ENCODE measurements at regions of chr12 and their contacts with region 1.

Region 1: DNA sequence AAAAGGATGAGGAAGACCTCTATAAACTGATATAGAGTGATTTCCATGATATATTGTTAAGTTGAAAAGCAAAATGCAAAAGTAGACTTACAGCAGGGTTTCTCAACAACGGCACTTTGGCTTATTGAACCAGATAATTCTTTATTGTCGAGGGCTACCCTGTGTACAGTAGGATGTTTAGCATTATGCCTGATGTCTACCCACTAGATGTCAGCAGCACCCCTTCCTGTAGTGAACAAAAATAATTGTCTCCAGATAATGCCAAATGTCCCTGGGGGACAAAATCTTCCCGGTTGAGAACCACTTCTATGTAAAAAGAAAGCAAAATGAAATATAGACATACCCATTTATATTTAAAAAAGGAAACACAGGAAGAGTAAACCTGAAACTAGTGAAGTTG is 32.4 kb downstream of the ABCD2 start:
- DNase-seq: no peak
- H3K4me3 ChIP-seq: no peak overlapping the region
- H3K4me3 Mint-ChIP-seq: no peak overlapping the region
- H3K27ac Mint-ChIP-seq: no peak overlapping the region
- H3K4me1 ChIP-seq: 0 out of 2 replicates have a peak, but pooled peaks cover 3% of the 10 kb centered on the region
- H3K4me1 Mint-ChIP-seq: no peaks in the 10 kb centered on the region
- H3K27me3 ChIP-seq: no peaks in the 10 kb centered on the region
- H3K27me3 Mint-ChIP-seq: peaks cover 3% of the 10 kb centered on the region
- CTCF ChIP-seq: peak in 1 of 2 experiments; percentile 43

Region 2: GRCh38 chr12:39605501-39605900 is 18.3 kb after region 1 on chr12:
- CTCF ChIA-PET with region 1: no interaction called
- POLR2A ChIA-PET with region 1: no interaction called
- intact Hi-C with region 1: no loop called
- DNase-seq: no peak
- H3K4me3 ChIP-seq: no peak overlapping the region
- H3K4me3 Mint-ChIP-seq: no peak overlapping the region
- H3K27ac Mint-ChIP-seq: no peak overlapping the region
- H3K4me1 ChIP-seq: no peaks in the 10 kb centered on the region
- H3K4me1 Mint-ChIP-seq: no peaks in the 10 kb centered on the region
- H3K27me3 ChIP-seq: no peaks in the 10 kb centered on the region
- H3K27me3 Mint-ChIP-seq: peaks cover 4% of the 10 kb centered on the region
- CTCF ChIP-seq: no peak

Region 3: DNA sequence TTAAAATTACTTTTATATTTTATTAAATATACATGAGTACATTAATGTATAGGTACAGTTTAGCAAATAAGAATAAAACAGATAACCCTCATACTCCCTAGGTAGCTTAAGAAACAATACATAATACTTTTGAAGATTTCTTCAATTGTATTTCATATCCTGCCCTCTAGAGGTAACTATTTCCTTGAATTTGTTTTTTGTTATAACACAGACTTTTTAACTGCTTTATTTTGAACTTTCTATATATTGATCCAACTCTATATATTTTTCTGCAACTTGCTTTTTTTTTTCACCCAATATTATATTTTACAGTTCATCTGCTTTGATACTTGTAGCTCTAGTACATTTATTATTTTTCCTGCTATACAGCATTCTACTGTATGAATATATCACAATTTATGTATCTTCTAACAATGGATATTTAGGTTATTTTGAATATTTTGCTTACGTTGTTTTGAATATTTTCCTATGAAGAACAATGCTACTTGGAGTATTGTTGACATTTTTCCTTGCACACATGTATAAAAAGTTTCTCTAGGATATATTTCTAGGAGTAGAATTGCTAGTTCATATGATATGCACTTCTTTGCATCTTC is 105.1 kb after region 1 on chr12:
- CTCF ChIA-PET with region 1: no interaction called
- POLR2A ChIA-PET with region 1: no interaction called
- intact Hi-C with region 1: loop called (anchors 10 kb)
- DNase-seq: no peak
- H3K4me3 ChIP-seq: no peak overlapping the region
- H3K4me3 Mint-ChIP-seq: no peak overlapping the region
- H3K27ac Mint-ChIP-seq: no peak overlapping the region
- H3K4me1 ChIP-seq: peaks cover 7% of the 10 kb centered on the region
- H3K4me1 Mint-ChIP-seq: peaks cover 10% of the 10 kb centered on the region
- H3K27me3 ChIP-seq: no peaks in the 10 kb centered on the region
- H3K27me3 Mint-ChIP-seq: no peaks in the 10 kb centered on the region
- CTCF ChIP-seq: peak in 1 of 2 experiments; percentile 35

Region 4: DNA sequence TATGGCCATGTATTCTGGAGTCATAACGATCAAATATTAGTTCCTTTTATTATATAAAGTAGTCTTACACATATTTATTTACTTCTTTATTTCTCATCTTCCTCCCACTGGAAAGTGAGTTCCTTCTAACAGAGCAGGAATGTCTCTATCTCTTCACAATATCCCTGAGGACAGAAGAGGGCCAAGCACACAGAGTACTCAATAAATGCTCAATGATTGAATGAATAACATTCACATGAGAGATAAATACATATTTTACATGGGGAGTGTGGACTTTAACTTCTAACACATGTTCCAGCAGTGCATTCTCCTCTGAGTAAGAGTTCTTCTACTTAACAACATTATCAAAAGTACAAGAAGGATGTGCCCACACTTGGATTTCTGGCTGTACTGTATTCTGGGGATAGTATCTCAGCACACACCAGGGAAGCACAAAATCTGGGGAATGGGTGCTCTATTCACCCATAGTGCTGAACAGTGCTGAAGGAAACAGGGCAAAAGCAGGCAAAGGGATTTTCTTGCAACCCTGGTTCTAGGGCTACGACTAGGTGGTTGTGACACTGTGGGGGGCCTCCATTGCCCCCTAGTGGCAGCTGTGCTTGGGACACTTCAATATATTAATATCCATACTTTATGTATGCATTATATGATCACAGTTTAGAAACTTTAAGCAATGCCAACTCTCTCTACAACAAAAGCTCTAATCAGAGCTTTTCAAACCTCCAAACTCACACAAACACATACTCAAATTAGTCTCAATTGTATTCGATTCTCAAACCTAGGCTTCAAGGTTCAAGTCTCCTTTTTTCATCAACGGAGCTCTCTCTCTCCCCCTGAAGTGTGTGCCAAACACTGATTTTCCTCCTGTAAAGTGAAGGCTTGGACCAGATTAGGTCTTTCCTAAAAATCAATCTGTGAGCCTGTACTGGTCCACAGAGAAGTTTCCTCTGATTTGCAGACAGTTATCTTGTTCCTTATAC is 403.2 kb after region 1 on chr12:
- CTCF ChIA-PET with region 1: no interaction called
- POLR2A ChIA-PET with region 1: no interaction called
- intact Hi-C with region 1: loop called (anchors 1 kb)
- DNase-seq: peak; percentile 39 to 62
- H3K4me3 ChIP-seq: no peak overlapping the region
- H3K4me3 Mint-ChIP-seq: no peak overlapping the region
- H3K27ac Mint-ChIP-seq: no peak overlapping the region
- H3K4me1 ChIP-seq: no peaks in the 10 kb centered on the region
- H3K4me1 Mint-ChIP-seq: no peaks in the 10 kb centered on the region
- H3K27me3 ChIP-seq: no peaks in the 10 kb centered on the region
- H3K27me3 Mint-ChIP-seq: no peaks in the 10 kb centered on the region
- CTCF ChIP-seq: peak; percentile 78 to 88

Measured in Caco-2 (cell line).